ENCODE measurements at regions of chr7 and their contacts with region 1.

Region 1: GRCh38 chr7:5396999-5397663 is 26.5 kb downstream of the TNRC18 start:
- DNase-seq: peak; percentile 72 to 95 (median 90)
- ATAC-seq: peak; percentile 92
- H3K4me3 Mint-ChIP-seq: peak overlapping the region; percentile 76 to 89 (median 84)
- H3K27ac Mint-ChIP-seq: peak overlapping the region; percentile 85 to 97 (median 92)
- H3K4me1 Mint-ChIP-seq: peaks cover 11 to 40% (median 38%) of the 10 kb centered on the region in 4 donors
- H3K27me3 Mint-ChIP-seq: no peaks in the 10 kb centered on the region

Region 2: DNA sequence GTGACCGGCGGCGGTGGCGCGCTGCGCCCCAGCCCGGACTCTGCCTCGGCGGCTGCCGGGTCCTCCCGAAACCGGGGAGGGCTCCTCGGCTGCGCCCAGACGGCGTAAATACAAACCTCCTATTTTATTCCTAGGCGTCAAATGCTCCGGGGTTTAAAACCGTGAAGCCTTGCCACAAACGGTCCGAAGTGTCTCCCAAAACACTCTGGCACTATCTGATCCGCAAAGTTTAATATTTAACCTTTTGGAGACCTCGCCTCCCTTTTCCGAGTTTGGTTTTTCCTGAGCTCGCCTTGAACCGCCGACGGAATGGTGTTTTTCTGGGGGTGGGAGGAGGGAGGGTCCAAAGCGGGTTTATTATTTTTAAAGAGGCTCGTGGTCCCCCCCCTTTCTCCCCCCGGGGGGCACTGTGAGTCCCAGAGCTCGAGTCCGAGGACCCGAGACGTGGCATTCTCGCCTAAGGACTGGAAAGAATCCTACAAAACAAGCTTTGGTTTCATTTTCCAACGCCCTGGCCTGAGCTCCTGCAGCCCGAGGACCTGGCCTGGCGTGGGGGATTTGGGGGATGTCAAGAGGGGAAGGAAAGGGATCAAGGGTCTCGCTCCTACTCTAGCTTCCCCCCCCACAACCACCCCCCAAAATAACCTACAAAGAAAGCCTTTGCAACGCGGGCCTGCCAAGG is 24.7 kb after region 1 on chr7:
- POLR2A ChIA-PET with region 1: interaction called, 14 read pairs
- DNase-seq: no peak
- ATAC-seq: no peak
- H3K4me3 Mint-ChIP-seq: peak overlapping the region; percentile 66 to 82 (median 78)
- H3K27ac Mint-ChIP-seq: peak overlapping the region in 1 of 10 donors; percentile 52
- H3K4me1 Mint-ChIP-seq: peaks cover 14 to 58% (median 49%) of the 10 kb centered on the region in 4 donors
- H3K27me3 Mint-ChIP-seq: peaks cover 21 to 66% (median 45%) of the 10 kb centered on the region in 5 donors

Region 3: GRCh38 chr7:5450549-5451372 is 53.6 kb after region 1 on chr7:
- POLR2A ChIA-PET with region 1: interaction called, 13 read pairs
- DNase-seq: peak; percentile 19 to 77 (median 40)
- ATAC-seq: peak; percentile 77 to 94
- H3K4me3 Mint-ChIP-seq: no peak overlapping the region
- H3K27ac Mint-ChIP-seq: peak overlapping the region in 2 of 10 donors; percentile 11 to 74
- H3K4me1 Mint-ChIP-seq: peaks cover 0 to 6% (median 4%) of the 10 kb centered on the region in 4 donors
- H3K27me3 Mint-ChIP-seq: peaks cover 0 to 11% (median 2%) of the 10 kb centered on the region in 5 donors

Measured in naive thymus-derived CD8-positive, alpha-beta T cell (primary cell).